Mammary epithelial cell (primary cell): ENCODE measurements at regions of chr2 and their contacts with region 1.

Region 1: GRCh38 chr2:72198532-72199241 is 51.0 kb upstream of the CYP26B1 start:
- DNase-seq: peak; percentile 79
- H3K4me3 ChIP-seq: no peak overlapping the region
- H3K27ac ChIP-seq: no peak overlapping the region
- H3K4me1 ChIP-seq: peaks cover 11% of the 10 kb centered on the region
- H3K27me3 ChIP-seq: no peaks in the 10 kb centered on the region
- CTCF ChIP-seq: peak; percentile 18 to 45

Region 2: DNA sequence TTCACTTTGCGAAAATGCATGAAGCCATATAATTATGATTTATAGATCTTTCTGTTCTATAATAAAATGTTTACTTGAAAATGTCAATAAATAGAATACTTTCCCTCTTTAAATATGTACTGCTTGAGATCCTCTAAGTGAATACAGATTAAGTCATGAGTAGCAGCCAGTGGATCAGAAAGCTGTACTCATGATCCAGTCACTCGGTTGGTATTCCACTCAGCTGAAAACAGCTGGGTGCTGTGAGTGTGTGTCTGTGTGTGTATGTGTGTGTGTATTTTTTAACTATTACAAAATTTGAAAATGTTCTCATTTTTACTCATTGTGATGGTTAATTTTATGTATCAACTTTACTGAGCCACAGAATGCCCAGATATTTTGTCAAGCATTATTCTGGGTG is 90.6 kb after region 1 on chr2:
- CTCF ChIA-PET with region 1: no interaction called
- dilution Hi-C with region 1: no loop called
- in situ Hi-C with region 1: no loop called
- intact Hi-C with region 1: loop called (anchors 10 kb)
- DNase-seq: no peak
- H3K4me3 ChIP-seq: no peak overlapping the region
- H3K27ac ChIP-seq: no peak overlapping the region
- H3K4me1 ChIP-seq: no peaks in the 10 kb centered on the region
- H3K27me3 ChIP-seq: no peaks in the 10 kb centered on the region
- CTCF ChIP-seq: no peak

Region 3: DNA sequence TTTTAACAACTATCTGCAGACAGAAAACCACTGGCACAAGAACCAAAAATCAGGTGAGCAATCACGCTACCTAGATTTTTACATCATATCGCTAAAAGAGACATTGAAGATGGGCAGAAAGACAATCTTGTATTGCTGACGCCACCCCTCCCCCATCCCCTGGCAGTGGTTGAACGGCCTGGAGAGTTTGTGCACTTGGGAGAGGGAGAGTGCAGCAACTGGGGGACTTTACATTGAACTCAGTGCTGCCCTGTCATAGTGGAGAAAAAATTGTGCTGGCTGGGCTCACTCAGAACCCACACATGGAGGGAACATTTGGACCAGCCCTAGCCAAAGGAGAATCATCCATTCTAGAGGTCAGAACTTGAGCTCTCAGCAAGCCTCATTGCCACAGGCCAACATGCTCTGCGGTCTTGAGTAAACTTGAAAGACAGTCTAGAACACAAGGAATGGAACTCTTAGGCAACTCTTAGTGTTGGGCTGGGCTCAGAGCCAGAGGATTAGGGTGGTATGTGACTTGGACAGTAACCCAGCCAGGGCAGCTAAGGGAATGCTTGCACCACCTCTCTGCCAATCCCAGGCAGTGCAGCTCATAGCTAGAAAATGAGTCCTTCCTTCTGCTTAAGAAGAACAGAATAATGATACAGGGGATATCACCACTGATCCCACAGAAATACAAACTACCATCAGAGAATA is 169.0 kb after region 1 on chr2:
- CTCF ChIA-PET with region 1: no interaction called
- dilution Hi-C with region 1: no loop called
- in situ Hi-C with region 1: loop called in 1 of 2 experiments (anchors 25 kb)
- intact Hi-C with region 1: loop called (anchors 2 kb)
- DNase-seq: peak; percentile 98
- H3K4me3 ChIP-seq: no peak overlapping the region
- H3K27ac ChIP-seq: no peak overlapping the region
- H3K4me1 ChIP-seq: peaks cover 6% of the 10 kb centered on the region
- H3K27me3 ChIP-seq: no peaks in the 10 kb centered on the region
- CTCF ChIP-seq: peak; percentile 64 to 84